Activated CD4-positive, alpha-beta T cell treated with anti-CD3 and anti-CD28 coated beads for 36 hours (primary cell): ENCODE measurements at regions of chr7 and their contacts with region 1.

Region 1: GRCh38 chr7:1919539-1920265 is 249.6 kb downstream of the ELFN1 start:
- DNase-seq: no peak
- ATAC-seq: peak; percentile 17
- H3K4me3 Mint-ChIP-seq: peak overlapping the region; percentile 68
- H3K27ac Mint-ChIP-seq: peak overlapping the region; percentile 76
- H3K4me1 Mint-ChIP-seq: peaks cover 70% of the 10 kb centered on the region
- H3K27me3 Mint-ChIP-seq: peaks cover 11% of the 10 kb centered on the region

Region 2: DNA sequence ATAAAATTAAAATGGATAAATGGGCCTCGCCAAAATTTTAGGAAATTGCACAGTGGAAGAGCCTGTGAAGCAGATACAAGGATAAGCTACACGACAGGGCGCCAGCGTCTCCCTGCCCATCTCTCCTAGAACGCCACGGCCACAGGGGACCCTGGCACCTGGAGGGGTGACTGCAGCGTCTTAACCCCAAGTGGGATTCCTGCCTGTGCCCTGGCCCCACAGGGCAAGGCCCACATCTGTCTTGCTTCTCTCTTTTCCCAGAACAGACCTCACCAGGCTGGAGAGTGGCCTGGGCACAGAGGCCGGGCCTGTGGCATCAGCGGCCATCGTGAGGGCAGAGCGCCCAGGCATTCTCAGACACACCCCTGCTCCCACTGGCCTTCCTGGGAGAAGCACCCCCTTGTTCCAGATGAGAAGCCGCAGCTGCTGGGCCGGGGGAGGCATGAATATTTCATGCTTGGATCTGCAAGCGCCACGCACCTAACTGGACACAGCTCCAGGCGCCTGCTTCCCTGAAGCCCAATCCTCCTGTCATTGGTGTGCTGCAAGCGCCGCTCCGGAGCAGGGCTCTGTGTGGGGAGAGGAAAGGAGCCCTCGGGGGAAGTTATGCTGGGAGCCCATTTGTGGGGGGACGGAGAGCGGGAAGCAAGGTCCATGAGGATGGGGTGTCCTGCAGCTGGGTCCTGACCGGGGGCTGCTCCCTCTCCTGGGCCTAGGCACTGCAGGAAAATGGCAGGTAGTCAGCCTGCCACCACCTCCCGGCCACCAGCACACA is 96.1 kb before region 1 on chr7:
- CTCF ChIA-PET with region 1: no interaction called
- POLR2A ChIA-PET with region 1: no interaction called
- intact Hi-C with region 1: loop called in 1 of 2 experiments (anchors 5 kb)
- DNase-seq: no peak
- ATAC-seq: no peak
- H3K4me3 Mint-ChIP-seq: no peak overlapping the region
- H3K27ac Mint-ChIP-seq: no peak overlapping the region
- H3K4me1 Mint-ChIP-seq: peaks cover 43% of the 10 kb centered on the region
- H3K27me3 Mint-ChIP-seq: no peaks in the 10 kb centered on the region

Region 3: GRCh38 chr7:1961701-1962276 is 42.1 kb after region 1 on chr7:
- CTCF ChIA-PET with region 1: no interaction called
- POLR2A ChIA-PET with region 1: no interaction called
- intact Hi-C with region 1: loop called (anchors 2 to 5 kb)
- DNase-seq: peak; percentile 75
- ATAC-seq: peak; percentile 78
- H3K4me3 Mint-ChIP-seq: peak overlapping the region; percentile 55
- H3K27ac Mint-ChIP-seq: peak overlapping the region; percentile 82
- H3K4me1 Mint-ChIP-seq: peaks cover 17% of the 10 kb centered on the region
- H3K27me3 Mint-ChIP-seq: no peaks in the 10 kb centered on the region

Region 4: GRCh38 chr7:1973306-1974281 is 53.9 kb after region 1 on chr7:
- CTCF ChIA-PET with region 1: no interaction called
- POLR2A ChIA-PET with region 1: no interaction called
- intact Hi-C with region 1: no loop called
- DNase-seq: no peak
- ATAC-seq: no peak
- H3K4me3 Mint-ChIP-seq: no peak overlapping the region
- H3K27ac Mint-ChIP-seq: no peak overlapping the region
- H3K4me1 Mint-ChIP-seq: peaks cover 13% of the 10 kb centered on the region
- H3K27me3 Mint-ChIP-seq: no peaks in the 10 kb centered on the region

Region 5: DNA sequence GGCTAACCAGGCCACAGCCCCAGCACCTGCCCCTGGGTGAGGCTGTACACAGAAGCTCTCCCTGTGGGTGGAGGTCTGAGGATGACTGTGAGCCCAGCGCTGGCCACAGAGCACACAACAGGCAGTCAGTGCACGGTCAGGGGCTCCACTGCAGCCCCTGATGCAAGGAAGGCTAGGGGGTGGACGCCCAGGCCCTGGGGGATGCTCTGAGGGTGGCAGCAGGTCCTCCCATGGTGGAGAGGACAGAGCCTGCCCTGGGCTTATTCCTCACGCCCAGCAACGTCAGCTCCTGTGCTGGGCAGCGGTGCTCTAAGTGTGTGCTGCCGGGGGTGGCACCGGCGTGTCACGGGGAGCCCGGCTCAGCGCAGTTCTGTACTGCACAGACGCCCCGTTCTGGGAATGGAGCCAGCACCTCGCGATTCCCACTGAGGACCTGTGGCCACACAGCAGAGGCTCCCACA is 89.9 kb after region 1 on chr7:
- CTCF ChIA-PET with region 1: no interaction called
- POLR2A ChIA-PET with region 1: no interaction called
- intact Hi-C with region 1: no loop called
- DNase-seq: no peak
- ATAC-seq: no peak
- H3K4me3 Mint-ChIP-seq: no peak overlapping the region
- H3K27ac Mint-ChIP-seq: no peak overlapping the region
- H3K4me1 Mint-ChIP-seq: no peaks in the 10 kb centered on the region
- H3K27me3 Mint-ChIP-seq: no peaks in the 10 kb centered on the region